ENCODE measurements at regions of chrX and their contacts with region 1.

Region 1: DNA sequence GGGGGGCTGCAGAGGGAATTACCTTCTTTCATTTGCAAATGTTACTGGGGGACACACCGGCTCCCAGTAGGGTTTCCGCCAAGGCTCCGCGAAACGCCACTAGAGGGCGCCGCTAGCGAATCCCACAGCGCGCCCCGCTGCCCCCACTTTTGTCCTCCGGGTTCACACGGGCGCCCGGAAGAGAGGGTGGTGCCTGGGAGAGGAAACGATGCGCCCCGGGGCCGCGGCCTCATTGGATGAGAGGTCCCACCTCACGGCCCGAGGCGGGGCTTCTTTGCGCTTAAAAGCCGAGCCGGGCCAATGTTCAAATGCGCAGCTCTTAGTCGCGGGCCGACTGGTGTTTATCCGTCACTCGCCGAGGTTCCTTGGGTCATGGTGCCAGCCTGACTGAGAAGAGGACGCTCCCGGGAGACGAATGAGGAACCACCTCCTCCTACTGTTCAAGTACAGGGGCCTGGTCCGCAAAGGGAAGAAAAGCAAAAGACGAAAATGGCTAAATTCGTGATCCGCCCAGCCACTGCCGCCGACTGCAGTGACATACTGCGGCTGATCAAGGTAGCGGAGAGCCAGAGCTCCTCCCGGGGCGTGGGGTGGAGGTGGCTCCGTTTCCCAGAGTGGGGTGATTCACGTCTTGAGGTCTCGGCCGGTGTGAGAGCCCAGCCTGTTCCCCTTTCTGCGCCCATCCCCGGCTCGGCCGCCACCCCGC is at the start of gene SAT1:
- DNase-seq: peak; percentile 71 to 97
- ATAC-seq: peak; percentile 80 to 84
- H3K4me3 ChIP-seq: peak within 1 kb of the TSS; percentile 86
- H3K27ac ChIP-seq: peak within 1 kb of the TSS; percentile 94 to 96
- H3K4me1 ChIP-seq: peaks cover 42% of the 10 kb centered on the region
- CTCF ChIP-seq: peak; percentile 80
- EP300 ChIP-seq: peak in 1 of 2 experiments; percentile 35; a peak in 1 of 5 replicates
- POLR2A ChIP-seq: peak; percentile 99
- RAD21 ChIP-seq: peak; percentile 73 to 88
- polyA plus RNA-seq, gene SAT1: 2,314 and 3,185 TPM in 2 replicates

Region 2: DNA sequence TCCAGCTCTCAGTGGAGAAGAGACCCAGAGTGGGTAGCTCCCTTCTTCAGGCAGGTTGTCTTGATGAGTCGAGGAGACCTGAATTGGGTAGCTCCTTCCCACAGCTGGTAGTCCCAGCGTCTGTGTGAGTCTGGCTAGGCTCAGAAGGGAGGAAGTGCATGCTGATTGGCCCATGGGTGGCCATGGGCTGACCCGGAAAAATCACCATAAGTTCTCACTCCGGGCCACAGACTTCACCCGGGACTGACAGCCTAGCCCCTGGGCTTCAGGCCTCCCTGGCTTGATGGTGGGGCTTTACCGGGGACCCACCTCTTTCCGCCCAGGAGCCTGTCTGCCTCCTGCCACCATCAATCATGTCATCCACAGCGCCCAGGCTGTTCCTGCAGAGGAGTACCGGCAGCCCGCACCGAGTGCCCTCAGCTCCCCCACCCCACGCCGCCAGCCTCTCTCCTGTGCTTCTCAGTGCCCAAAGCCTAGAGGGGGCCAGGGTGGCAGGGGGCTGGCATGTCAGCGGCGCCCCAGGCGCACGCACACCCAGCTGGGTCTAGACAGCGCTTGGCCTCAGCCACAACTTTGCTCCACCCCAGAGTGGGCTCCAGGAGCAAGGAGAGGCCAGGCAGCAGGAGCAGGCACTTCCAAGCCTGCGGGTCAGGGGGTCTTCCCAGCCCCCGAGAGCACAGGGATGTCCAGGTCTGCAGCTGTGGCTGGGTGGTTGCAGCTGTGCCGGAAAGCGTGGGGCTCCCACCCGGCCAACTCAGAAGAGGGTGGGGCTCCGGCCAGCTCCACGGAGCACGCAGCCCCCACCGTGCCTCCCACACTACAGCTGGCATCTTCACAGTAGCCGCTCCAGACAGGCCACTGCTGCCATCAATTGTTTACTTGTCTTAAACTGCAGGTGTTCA is 16.1 kb before region 1 on chrX:
- CTCF ChIA-PET with region 1: interaction called, 21 read pairs
- POLR2A ChIA-PET with region 1: interaction called, 5 read pairs
- DNase-seq: no peak
- ATAC-seq: peak in 1 of 2 experiments; percentile 52; a peak in 3 of 6 replicates
- H3K4me3 ChIP-seq: no peak overlapping the region
- H3K27ac ChIP-seq: no peak overlapping the region
- H3K4me1 ChIP-seq: peaks cover 16% of the 10 kb centered on the region
- CTCF ChIP-seq: no peak
- EP300 ChIP-seq: no peak
- POLR2A ChIP-seq: no peak
- RAD21 ChIP-seq: no peak

Region 3: DNA sequence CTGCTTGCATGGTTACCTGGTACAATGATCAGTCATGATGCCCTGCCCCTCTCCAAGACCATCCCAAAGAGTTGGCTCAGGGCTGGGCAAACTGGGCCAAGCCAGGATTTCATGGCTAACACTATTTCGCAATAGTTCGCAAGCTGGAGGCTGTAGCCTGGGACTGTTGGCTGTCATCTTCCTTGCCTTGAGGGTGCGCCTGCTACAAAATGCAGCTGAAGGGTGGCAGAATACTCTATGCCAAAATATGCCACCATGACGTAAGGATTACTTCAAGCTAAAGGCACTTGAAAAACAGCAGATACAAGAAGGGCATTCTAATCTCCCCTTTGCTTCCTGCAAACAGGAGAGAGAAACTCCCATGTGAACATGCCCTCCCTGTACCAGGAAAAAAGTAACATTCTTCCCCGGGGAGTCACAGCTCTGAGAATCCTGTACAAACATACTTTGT is 20.9 kb after region 1 on chrX:
- CTCF ChIA-PET with region 1: interaction called, 22 read pairs
- POLR2A ChIA-PET with region 1: interaction called, 58 read pairs
- DNase-seq: peak; percentile 70 to 96
- ATAC-seq: peak; percentile 84 to 86
- H3K4me3 ChIP-seq: peak overlapping the region; percentile 18; the same call in 1 of the 3 replicates
- H3K27ac ChIP-seq: peak overlapping the region; percentile 88 to 98
- H3K4me1 ChIP-seq: peaks cover 66% of the 10 kb centered on the region
- CTCF ChIP-seq: no peak
- EP300 ChIP-seq: peak; percentile 87 to 93; a peak in 4 of 5 replicates
- POLR2A ChIP-seq: no peak
- RAD21 ChIP-seq: no peak; a peak in 2 of 5 replicates

Region 4: DNA sequence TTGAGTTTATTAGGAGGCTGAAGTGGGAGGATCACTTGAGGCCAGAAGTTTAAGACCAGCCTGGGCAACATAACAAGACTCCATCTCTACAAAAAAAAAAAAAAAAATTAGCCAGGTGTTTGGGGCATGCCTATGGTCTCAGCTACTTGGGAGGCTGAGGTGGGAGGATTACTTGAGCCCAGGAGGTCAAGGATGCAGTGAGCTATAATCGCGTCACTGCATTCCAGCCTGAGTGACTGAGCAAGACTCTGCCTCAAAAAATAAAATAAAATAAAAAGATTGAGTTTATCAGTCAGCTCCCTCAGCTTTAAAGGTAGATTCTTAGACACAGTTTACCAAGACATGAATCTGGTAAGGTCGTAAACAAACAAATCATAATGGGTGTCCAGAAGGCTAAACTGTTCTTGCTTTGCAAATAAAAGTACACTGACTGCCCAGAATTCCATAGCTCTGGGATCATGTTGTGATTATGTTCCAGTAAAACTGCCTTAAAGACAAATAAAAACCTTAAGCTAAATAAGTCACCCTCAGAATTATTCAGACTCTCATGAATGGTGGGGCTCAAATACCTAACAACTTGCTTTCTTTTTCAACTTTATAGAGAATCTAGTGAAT is 106.0 kb after region 1 on chrX:
- CTCF ChIA-PET with region 1: interaction called, 21 read pairs
- POLR2A ChIA-PET with region 1: interaction called, 46 read pairs
- DNase-seq: peak in 1 of 2 experiments; percentile 82
- ATAC-seq: peak; percentile 67 to 74
- H3K4me3 ChIP-seq: no peak overlapping the region
- H3K27ac ChIP-seq: peak overlapping the region; percentile 88 to 97
- H3K4me1 ChIP-seq: peaks cover 60% of the 10 kb centered on the region
- CTCF ChIP-seq: no peak
- EP300 ChIP-seq: peak; percentile 50 to 58; a peak in 2 of 5 replicates
- POLR2A ChIP-seq: no peak
- RAD21 ChIP-seq: no peak

Region 5: GRCh38 chrX:23993012-23993633 is 210.1 kb after region 1 on chrX:
- CTCF ChIA-PET with region 1: no interaction called
- POLR2A ChIA-PET with region 1: no interaction called
- DNase-seq: no peak
- ATAC-seq: no peak
- H3K4me3 ChIP-seq: no peak overlapping the region
- H3K27ac ChIP-seq: no peak overlapping the region
- H3K4me1 ChIP-seq: no peaks in the 10 kb centered on the region
- CTCF ChIP-seq: no peak
- EP300 ChIP-seq: no peak
- POLR2A ChIP-seq: no peak
- RAD21 ChIP-seq: no peak

Region 6: DNA sequence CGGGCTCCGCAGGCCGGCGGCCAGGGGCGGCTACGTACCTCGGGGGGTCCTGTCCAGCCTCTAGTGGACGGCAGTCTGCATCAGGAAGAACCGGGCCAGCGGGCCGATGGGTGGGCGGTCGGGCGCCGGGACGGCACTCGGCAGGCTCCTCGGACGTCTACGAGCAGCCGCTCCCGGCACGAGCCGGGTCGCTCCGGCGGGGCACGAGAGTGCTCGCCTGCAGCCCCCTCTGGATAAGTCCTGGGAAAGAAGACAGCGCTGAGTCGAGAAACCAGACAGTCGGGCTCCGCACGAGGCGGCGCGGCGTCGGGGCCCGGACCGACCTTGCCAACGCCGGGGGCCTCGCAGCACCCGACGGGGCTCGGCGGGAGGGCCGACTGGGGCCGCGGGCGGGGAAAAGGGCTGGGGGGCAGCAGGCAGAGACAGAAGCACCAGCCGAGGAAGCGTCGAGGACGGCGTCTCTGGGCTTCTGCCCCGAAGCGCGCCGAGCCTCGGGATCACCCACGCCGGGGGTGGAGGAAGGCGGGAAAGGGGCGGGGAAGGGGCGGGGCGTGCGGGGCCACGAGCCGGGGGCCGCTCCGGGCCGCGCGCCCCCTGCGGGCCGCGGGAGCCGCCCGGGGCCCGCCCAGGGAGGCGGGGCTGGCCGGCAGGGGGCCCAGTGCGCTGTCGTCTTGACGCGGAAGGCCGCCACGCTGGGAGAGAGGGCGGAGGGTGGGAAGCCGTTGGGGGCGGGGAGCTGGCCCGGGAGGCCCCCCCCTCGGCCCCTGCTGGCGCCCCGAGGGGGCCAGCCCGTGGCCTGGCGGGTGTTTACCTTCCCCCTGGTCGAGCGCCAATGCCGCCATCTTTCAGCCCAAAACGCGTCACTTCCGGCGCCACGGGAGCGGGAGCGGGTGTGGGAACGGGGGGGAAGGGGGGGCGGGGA is 242.1 kb after region 1 on chrX:
- CTCF ChIA-PET with region 1: interaction called, 3 read pairs
- POLR2A ChIA-PET with region 1: interaction called, 10 read pairs
- DNase-seq: peak; percentile 73 to 93
- ATAC-seq: peak; percentile 84 to 89
- H3K4me3 ChIP-seq: peak overlapping the region; percentile 95
- H3K27ac ChIP-seq: peak overlapping the region; percentile 99
- H3K4me1 ChIP-seq: peaks cover 24% of the 10 kb centered on the region
- CTCF ChIP-seq: peak; percentile 44
- EP300 ChIP-seq: peak in 1 of 2 experiments; percentile 63; a peak in 2 of 5 replicates
- POLR2A ChIP-seq: peak; percentile 98
- RAD21 ChIP-seq: no peak; a peak in 2 of 5 replicates